Esophagus squamous epithelium (tissue), 5 donors: ENCODE measurements at regions of chr6 and their contacts with region 1.

Region 1: DNA sequence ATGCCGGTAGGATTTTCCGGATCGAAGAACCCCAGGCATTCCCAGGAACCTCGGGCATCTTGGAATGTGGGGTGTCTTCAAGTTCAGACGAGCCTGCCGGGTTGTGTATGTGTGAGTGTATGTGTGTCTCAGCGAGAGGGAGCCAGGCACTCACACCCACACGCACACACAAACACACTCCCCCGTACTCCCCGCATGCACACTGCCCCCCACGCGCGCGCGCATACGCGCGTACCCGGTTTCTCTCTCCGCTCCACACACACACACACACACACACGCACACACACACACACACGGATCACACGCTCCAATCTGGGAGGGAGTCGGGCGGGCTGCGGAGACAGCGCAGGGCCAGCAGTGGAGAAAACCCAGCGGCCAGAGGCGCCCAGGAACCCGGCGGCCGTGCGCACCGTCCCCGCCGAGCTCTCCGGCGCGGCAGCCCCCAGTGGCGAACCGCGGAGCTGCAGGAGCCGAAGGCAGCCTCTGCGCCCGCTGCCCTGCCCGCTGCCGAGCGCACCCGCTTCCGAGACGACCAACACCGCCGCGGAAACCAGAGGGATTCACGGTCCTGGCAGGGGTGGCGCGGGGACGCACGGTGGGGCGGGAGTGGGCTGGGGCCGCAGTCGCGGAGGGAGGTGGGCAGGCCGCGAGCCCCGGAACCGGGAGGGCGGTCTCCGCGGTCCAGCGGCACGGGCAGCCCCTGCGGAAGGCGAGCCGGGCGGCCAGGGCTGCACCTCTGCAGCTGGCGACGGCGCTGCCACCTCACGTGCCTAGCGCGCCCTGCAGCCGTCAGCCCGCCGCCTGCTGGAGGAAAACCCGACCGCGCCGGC is at the start of gene LRFN2:
- DNase-seq: no peak
- H3K4me3 ChIP-seq: peak within 1 kb of the TSS; percentile 42 to 71 (median 51)
- H3K27ac ChIP-seq: peak within 1 kb of the TSS in 3 of 4 donors; percentile 25 to 68 (median 59)
- H3K4me1 ChIP-seq: peaks cover 14 to 32% (median 16%) of the 10 kb centered on the region in 3 donors
- H3K27me3 ChIP-seq: peaks cover 0 to 82% (median 0%) of the 10 kb centered on the region in 4 donors
- CTCF ChIP-seq: peak; percentile 62 to 86 (median 72)
- POLR2A ChIP-seq: no peak
- total RNA-seq, gene LRFN2: 0.18 to 2.2 (median 0.34) TPM

Region 2: DNA sequence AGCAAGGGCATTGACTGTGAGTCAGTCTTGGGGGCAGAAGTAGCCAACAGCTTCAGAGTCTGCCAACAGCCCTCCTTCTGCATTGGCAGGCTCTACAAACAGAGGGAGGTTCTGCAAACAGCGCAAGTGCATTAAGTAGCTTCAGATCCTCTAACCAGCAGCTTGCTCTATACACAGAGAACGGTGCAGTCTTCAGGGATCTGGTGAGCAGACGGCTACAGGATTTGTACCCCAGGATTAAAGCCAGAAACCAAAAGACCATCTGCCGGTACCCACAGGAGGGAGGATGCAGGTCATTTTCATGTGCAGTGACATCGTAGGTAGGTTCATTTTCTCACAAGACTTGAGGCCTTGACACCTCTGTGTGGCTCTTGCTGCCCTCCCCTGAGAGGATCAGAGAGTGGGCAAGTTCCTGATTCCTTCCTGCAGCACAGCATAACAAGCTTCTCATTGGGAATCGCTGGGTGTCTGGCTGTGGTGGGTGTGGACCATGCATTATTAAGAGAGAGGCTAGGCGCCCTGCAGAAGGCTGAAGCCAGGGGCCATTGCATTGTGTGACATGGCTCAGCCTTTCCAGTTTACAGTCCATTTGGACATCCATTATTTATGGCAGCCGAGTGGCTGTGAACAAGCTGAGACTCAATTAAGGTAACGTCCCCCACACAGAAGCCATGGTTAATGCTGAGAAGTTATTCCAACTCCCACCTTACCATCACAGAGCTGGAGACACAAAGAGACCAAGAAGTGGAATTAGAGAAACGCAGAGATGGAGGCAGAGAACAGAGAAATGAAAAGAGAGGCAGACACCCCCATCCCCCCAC is 250.3 kb before region 1 on chr6:
- intact Hi-C with region 1: loop called (anchors 10 kb)
- DNase-seq: no peak
- H3K4me3 ChIP-seq: no peak overlapping the region
- H3K27ac ChIP-seq: no peak overlapping the region
- H3K4me1 ChIP-seq: no peaks in the 10 kb centered on the region
- H3K27me3 ChIP-seq: peaks cover 0 to 38% (median 0%) of the 10 kb centered on the region in 4 donors
- CTCF ChIP-seq: no peak
- POLR2A ChIP-seq: no peak

Region 3: GRCh38 chr6:40477246-40478126 is 110.0 kb before region 1 on chr6:
- intact Hi-C with region 1: no loop called
- DNase-seq: no peak
- H3K4me3 ChIP-seq: no peak overlapping the region
- H3K27ac ChIP-seq: no peak overlapping the region
- H3K4me1 ChIP-seq: no peaks in the 10 kb centered on the region
- H3K27me3 ChIP-seq: peaks cover 0 to 33% (median 0%) of the 10 kb centered on the region in 4 donors
- CTCF ChIP-seq: no peak
- POLR2A ChIP-seq: no peak

Region 4: DNA sequence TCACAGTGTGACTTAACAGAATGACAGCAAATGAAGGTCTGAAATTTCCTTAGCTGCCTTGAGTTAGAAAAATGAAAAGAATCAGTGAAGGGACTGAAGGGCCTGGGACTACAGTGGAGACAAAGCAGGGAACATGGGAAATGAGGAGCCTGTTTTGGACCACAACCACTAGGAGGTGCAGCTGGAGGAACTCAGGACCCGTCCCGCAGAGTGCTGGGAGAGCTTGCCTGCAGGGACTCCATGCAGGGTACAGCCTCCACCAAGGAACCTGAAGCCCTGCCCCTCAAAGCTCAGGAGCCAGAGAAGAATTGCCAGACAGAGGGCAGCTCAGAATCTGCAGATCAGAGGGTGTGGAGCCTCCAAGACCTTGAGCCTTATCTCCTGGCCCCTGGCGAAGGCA is 51.0 kb before region 1 on chr6:
- intact Hi-C with region 1: no loop called
- DNase-seq: no peak
- H3K4me3 ChIP-seq: no peak overlapping the region
- H3K27ac ChIP-seq: no peak overlapping the region
- H3K4me1 ChIP-seq: no peaks in the 10 kb centered on the region
- H3K27me3 ChIP-seq: peaks cover 0 to 17% (median 0%) of the 10 kb centered on the region in 4 donors
- CTCF ChIP-seq: peak in 1 of 6 experiments; percentile 28
- POLR2A ChIP-seq: no peak

Region 5: DNA sequence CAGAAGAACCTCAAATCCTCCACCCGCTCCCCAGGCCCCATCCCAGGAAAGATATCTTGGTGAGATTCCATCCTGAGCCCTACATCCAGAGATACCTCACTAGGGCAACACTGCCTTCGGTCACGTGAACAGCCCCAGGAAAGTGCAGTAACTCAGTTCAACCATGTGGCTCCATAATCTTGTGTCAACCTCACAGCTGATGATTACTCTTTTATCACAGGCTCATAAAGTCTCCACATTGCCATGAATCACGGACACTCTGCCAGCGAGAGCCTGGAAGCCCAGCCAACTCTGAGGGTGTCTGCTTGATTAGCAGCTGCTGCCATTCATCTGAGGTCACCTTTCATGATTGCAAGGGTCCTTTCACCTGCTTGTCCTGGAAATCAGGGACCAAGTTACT is 175.5 kb after region 1 on chr6:
- intact Hi-C with region 1: no loop called
- DNase-seq: no peak
- H3K4me3 ChIP-seq: no peak overlapping the region
- H3K27ac ChIP-seq: no peak overlapping the region
- H3K4me1 ChIP-seq: no peaks in the 10 kb centered on the region
- H3K27me3 ChIP-seq: peaks cover 0 to 22% (median 0%) of the 10 kb centered on the region in 4 donors
- CTCF ChIP-seq: no peak
- POLR2A ChIP-seq: no peak